T-cell (primary cell): ENCODE measurements at regions of chr21 and their contacts with region 1.

Region 1: DNA sequence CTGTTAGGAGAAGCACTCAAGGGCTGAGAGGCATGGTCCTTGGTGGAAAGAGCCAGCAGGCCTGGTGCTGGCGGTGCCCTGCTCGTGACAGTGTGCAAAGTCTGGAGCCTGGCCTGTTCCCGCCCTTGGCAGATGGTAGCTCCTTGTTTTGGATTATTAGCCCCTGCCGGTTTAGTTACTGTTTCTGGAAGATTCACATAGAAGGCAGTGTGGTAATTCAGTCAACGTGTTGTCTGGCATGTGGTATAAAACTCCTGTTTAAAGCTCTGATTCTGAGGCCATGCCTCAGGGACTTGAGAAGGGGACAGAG is 6.8 kb downstream of the PKNOX1 start:
- DNase-seq: no peak
- ATAC-seq: no peak
- H3K4me3 ChIP-seq: no peak overlapping the region
- H3K4me3 Mint-ChIP-seq: no peak overlapping the region
- H3K27ac ChIP-seq: no peak overlapping the region
- H3K27ac Mint-ChIP-seq: no peak overlapping the region
- H3K4me1 ChIP-seq: peaks cover 4 to 11% of the 10 kb centered on the region in 2 experiments
- H3K4me1 Mint-ChIP-seq: peaks cover 39 to 52% (median 51%) of the 10 kb centered on the region in 3 donors
- H3K27me3 ChIP-seq: no peaks in the 10 kb centered on the region
- H3K27me3 Mint-ChIP-seq: no peaks in the 10 kb centered on the region

Region 2: DNA sequence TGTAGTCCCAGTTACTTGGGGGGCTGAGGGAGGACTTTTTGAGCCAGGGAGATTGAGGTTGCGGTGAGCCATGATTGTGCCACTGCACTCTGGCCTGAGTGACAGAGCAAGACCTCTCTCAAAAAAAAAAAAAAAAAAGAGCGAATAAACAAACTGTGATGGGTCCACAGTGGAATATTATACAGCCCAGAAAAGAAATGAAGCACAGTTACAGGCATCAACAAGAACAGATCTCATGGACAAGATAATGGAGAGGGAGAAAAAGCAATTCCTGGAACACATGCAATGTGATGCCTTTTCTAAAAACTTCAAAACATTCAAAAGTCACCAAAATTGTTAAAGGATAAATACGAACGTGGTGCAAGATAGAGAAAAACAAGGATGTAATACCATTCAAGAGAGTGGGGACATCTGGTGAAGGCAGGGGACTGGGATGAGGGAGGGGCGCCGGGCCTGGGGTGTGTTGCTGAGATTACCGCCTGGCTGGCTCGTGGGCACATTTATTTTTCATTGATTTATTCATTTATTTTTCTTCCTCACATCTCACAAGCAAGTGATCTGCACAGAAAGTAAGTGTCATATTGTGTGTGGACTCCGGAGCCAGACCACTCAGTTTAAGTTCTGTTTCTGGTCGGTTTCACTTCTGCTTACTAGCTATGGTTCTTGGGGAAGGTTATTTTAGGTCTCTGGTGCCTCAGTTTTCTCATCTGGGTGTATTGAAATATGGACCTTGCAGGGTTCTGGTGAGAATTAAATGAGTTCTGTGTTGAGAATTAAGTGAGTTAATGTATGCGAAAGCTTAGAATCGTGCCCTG is 732.2 kb before region 1 on chr21:
- CTCF ChIA-PET with region 1: no interaction called
- POLR2A ChIA-PET with region 1: no interaction called
- DNase-seq: no peak
- ATAC-seq: no peak
- H3K4me3 ChIP-seq: no peak overlapping the region
- H3K4me3 Mint-ChIP-seq: no peak overlapping the region
- H3K27ac ChIP-seq: no peak overlapping the region
- H3K27ac Mint-ChIP-seq: no peak overlapping the region
- H3K4me1 ChIP-seq: peaks cover 0 to 22% of the 10 kb centered on the region in 2 experiments
- H3K4me1 Mint-ChIP-seq: peaks cover 37 to 54% (median 48%) of the 10 kb centered on the region in 3 donors
- H3K27me3 ChIP-seq: peaks cover 0 to 4% of the 10 kb centered on the region in 2 experiments
- H3K27me3 Mint-ChIP-seq: no peaks in the 10 kb centered on the region

Region 3: DNA sequence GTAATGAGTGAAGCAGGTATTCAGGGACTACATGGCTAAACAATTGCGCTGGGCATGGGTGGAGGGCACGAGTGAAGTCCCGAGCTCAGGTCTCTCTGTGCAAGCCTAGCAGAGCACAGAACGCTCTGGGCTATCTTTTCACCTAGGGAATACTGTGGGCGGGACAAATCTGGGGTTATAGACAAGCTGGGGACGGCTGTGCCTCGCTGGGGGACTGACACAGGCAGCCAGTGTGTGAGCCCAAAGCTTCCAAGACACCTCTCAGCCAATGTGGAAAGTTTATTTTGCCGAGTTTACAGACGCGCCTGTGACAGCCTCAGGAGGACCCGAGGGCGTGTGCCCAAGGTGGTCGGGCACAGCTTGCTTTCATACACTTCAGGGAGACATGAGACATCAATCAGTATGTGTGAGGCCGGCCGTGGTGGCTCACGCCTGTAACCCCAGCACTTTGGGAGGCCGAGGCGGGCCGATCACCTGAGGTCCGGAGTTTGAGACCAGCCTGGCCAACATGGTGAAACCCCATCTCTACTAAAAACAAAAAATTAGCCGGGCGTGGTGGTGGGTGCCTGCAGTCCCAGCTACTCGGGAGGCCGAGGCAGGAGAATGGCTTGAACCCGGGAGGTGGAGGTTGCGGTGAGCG is 53.9 kb before region 1 on chr21:
- CTCF ChIA-PET with region 1: no interaction called
- POLR2A ChIA-PET with region 1: interaction called in 1 of 2 experiments, 11 read pairs
- DNase-seq: no peak
- ATAC-seq: no peak
- H3K4me3 ChIP-seq: no peak overlapping the region
- H3K4me3 Mint-ChIP-seq: no peak overlapping the region
- H3K27ac ChIP-seq: no peak overlapping the region
- H3K27ac Mint-ChIP-seq: no peak overlapping the region
- H3K4me1 ChIP-seq: peaks cover 7 to 25% of the 10 kb centered on the region in 2 experiments
- H3K4me1 Mint-ChIP-seq: peaks cover 15 to 21% (median 18%) of the 10 kb centered on the region in 3 donors
- H3K27me3 ChIP-seq: no peaks in the 10 kb centered on the region
- H3K27me3 Mint-ChIP-seq: no peaks in the 10 kb centered on the region